ENCODE measurements at regions of chr18 and their contacts with region 1.

Region 1: GRCh38 chr18:22348521-22349316 is 69.0 kb downstream of the CTAGE1 start:
- DNase-seq: peak; percentile 42
- ATAC-seq: peak; percentile 77
- H3K4me3 ChIP-seq: peak overlapping the region; percentile 25
- H3K27ac ChIP-seq: peak overlapping the region; percentile 74
- H3K4me1 ChIP-seq: peaks cover 22% of the 10 kb centered on the region
- H3K27me3 ChIP-seq: no peaks in the 10 kb centered on the region
- CTCF ChIP-seq: no peak
- POLR2A ChIP-seq: no peak
- RAD21 ChIP-seq: no peak

Region 2: DNA sequence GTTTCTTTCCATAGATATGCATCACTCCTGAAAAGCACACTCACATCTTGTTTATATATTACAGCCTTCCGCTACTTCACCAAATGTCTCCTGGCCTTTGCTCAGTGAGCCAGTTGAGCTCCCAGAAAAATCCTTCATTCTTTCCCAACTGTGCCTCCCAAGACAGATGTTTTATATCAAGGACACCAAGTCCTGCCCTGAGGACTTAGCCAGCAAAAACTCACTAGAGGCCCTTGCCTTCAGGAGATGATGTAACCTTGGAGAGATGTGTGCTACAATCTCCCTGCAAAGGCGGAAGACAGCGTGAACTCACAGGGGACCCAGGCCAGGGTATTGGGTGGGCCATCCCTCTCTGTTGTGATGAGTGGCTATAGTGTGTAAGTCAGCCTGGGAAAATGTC is 155.1 kb after region 1 on chr18:
- CTCF ChIA-PET with region 1: no interaction called
- POLR2A ChIA-PET with region 1: no interaction called
- dilution Hi-C with region 1: no loop called
- in situ Hi-C with region 1: no loop called
- intact Hi-C with region 1: loop called (anchors 5 kb)
- DNase-seq: peak; percentile 97
- ATAC-seq: peak; percentile 87
- H3K4me3 ChIP-seq: no peak overlapping the region
- H3K27ac ChIP-seq: peak overlapping the region; percentile 93
- H3K4me1 ChIP-seq: peaks cover 14% of the 10 kb centered on the region
- H3K27me3 ChIP-seq: no peaks in the 10 kb centered on the region
- CTCF ChIP-seq: no peak
- POLR2A ChIP-seq: no peak
- RAD21 ChIP-seq: no peak

Region 3: DNA sequence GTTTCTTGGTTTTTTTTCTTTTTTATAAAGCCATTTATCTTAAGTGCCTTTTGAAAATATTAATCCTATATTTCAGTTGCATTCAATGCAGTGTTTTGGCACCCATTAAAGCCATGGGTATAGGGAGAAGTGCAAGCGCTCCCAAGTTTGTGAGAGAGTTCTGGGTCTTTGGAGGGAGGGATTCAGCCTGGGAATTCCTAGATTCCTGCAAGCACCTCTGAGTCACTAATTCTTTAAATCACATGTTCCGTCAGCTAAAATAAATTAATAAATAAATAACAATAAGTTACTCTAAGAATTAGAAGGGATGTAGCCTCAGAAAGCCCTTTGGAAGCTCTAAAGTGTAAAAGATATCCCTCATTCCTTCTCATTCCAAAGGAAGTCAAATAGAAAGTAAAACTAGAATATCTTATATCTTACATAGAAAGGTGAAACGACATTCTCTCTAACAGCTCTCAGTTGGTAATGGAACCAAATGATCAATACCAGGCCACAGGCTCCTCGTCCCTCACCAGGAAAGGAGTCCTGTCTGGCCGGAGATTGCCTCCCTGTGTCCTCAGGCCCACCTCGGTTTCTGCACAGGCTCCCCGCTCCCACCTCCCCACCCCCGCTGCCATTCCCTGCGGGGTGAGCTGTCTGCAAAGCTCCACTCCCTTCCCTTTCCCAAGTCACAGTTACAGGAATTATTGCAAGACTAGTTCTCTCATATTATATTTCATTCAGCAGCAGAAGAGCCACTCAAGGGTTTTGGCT is 362.1 kb after region 1 on chr18:
- CTCF ChIA-PET with region 1: no interaction called
- POLR2A ChIA-PET with region 1: no interaction called
- dilution Hi-C with region 1: no loop called
- in situ Hi-C with region 1: no loop called
- intact Hi-C with region 1: no loop called
- DNase-seq: peak; percentile 64
- ATAC-seq: peak; percentile 90
- H3K4me3 ChIP-seq: peak overlapping the region; percentile 44
- H3K27ac ChIP-seq: peak overlapping the region; percentile 60
- H3K4me1 ChIP-seq: peaks cover 6% of the 10 kb centered on the region
- H3K27me3 ChIP-seq: no peaks in the 10 kb centered on the region
- CTCF ChIP-seq: no peak
- POLR2A ChIP-seq: no peak
- RAD21 ChIP-seq: no peak

Measured in IMR-90 (cell line).